MCF 10A (cell line): ENCODE measurements at regions of chr2 and their contacts with region 1.

Region 1: GRCh38 chr2:229408356-229408755 is 137.3 kb upstream of the PID1 start:
- DNase-seq: peak; percentile 97
- H3K4me3 Mint-ChIP-seq: peak overlapping the region; percentile 48
- H3K27ac Mint-ChIP-seq: peak overlapping the region; percentile 99
- H3K4me1 Mint-ChIP-seq: peaks cover 57% of the 10 kb centered on the region
- H3K27me3 Mint-ChIP-seq: no peaks in the 10 kb centered on the region
- CTCF ChIP-seq: no peak

Region 2: GRCh38 chr2:229129738-229130371 is 278.5 kb before region 1 on chr2:
- CTCF ChIA-PET with region 1: no interaction called
- POLR2A ChIA-PET with region 1: no interaction called
- intact Hi-C with region 1: no loop called
- DNase-seq: no peak
- H3K4me3 Mint-ChIP-seq: no peak overlapping the region
- H3K27ac Mint-ChIP-seq: no peak overlapping the region
- H3K4me1 Mint-ChIP-seq: peaks cover 11% of the 10 kb centered on the region
- H3K27me3 Mint-ChIP-seq: no peaks in the 10 kb centered on the region
- CTCF ChIP-seq: no peak

Region 3: DNA sequence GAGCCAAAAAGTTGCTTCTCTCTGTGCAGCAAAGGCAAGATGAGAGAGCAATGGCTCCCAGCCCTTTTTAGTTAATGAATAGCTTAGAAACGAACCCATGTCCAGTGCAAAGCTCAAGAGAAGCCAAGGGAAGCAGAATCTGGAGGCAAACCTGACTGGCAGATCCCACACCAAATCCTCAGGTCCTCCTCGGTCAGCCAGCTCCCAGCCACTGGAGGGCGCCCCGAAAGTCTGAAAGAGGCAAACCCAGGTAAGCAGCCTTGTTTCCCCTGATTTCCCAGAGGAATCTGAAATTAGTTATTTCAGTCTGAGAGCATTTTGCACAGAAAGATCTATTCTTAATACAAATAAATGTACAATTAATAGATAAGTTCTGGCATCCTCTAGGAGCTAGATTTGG is 66.0 kb before region 1 on chr2:
- CTCF ChIA-PET with region 1: interaction called, 4 read pairs
- POLR2A ChIA-PET with region 1: interaction called, 16 read pairs
- intact Hi-C with region 1: no loop called
- DNase-seq: peak; percentile 74
- H3K4me3 Mint-ChIP-seq: no peak overlapping the region
- H3K27ac Mint-ChIP-seq: no peak overlapping the region
- H3K4me1 Mint-ChIP-seq: peaks cover 33% of the 10 kb centered on the region
- H3K27me3 Mint-ChIP-seq: no peaks in the 10 kb centered on the region
- CTCF ChIP-seq: no peak

Region 4: DNA sequence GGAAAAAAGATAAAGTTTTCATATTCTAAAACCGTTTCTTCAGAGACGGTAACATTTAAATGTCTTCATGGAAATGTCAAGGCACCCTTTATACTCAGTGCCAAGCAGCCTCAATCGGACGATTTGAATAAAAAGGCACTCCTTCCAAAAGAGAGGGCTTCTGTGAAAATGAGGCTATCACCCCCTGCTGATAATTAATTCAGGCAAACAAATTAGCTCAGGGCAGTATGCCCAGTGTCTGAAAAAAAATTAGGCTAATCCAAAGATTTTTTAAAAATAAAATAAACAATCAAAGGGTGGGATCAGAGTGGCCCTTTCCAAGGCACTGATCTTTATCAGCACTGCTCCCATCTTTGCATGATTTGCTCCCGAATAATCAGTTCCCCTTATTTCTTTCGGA is 13.7 kb after region 1 on chr2:
- CTCF ChIA-PET with region 1: interaction called, 3 read pairs
- POLR2A ChIA-PET with region 1: interaction called, 16 read pairs
- intact Hi-C with region 1: no loop called
- DNase-seq: no peak
- H3K4me3 Mint-ChIP-seq: no peak overlapping the region
- H3K27ac Mint-ChIP-seq: no peak overlapping the region
- H3K4me1 Mint-ChIP-seq: peaks cover 9% of the 10 kb centered on the region
- H3K27me3 Mint-ChIP-seq: no peaks in the 10 kb centered on the region
- CTCF ChIP-seq: no peak

Region 5: DNA sequence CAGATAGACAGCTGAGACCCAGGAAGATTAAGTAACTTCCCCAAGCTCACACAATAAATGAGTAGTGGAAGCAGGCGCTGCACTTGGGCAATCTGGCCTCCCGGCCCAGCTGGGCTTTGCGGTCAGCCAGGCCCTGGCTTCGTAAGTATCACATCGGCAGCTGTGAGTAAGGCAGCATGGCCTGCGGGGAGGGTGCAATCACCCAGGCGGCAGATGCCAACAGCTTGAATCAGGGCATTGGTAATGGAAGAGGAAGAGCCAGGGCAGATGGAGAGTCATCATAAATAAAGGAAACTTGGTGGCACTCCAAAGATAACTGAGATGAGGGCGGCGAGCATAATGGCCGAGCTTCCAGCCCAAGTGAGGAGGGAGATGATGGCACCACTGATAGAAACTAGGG is 80.7 kb after region 1 on chr2:
- CTCF ChIA-PET with region 1: no interaction called
- POLR2A ChIA-PET with region 1: interaction called, 11 read pairs
- intact Hi-C with region 1: no loop called
- DNase-seq: peak; percentile 99
- H3K4me3 Mint-ChIP-seq: peak overlapping the region; percentile 68
- H3K27ac Mint-ChIP-seq: peak overlapping the region; percentile 46
- H3K4me1 Mint-ChIP-seq: peaks cover 39% of the 10 kb centered on the region
- H3K27me3 Mint-ChIP-seq: no peaks in the 10 kb centered on the region
- CTCF ChIP-seq: no peak